PC-9 (cell line): ENCODE measurements at regions of chr2 and their contacts with region 1.

Region 1: GRCh38 chr2:175004980-175005732 is at the start of gene CHN1:
- DNase-seq: peak; percentile 48 to 66
- H3K4me3 ChIP-seq: peak within 1 kb of the TSS; percentile 77
- H3K27ac ChIP-seq: no peak within 1 kb of the TSS
- H3K4me1 ChIP-seq: peaks cover 13% of the 10 kb centered on the region
- H3K27me3 ChIP-seq: peaks cover 47% of the 10 kb centered on the region
- CTCF ChIP-seq: no peak
- total RNA-seq, gene CHN1: 11.8 and 14.0 TPM in 2 replicates

Region 2: DNA sequence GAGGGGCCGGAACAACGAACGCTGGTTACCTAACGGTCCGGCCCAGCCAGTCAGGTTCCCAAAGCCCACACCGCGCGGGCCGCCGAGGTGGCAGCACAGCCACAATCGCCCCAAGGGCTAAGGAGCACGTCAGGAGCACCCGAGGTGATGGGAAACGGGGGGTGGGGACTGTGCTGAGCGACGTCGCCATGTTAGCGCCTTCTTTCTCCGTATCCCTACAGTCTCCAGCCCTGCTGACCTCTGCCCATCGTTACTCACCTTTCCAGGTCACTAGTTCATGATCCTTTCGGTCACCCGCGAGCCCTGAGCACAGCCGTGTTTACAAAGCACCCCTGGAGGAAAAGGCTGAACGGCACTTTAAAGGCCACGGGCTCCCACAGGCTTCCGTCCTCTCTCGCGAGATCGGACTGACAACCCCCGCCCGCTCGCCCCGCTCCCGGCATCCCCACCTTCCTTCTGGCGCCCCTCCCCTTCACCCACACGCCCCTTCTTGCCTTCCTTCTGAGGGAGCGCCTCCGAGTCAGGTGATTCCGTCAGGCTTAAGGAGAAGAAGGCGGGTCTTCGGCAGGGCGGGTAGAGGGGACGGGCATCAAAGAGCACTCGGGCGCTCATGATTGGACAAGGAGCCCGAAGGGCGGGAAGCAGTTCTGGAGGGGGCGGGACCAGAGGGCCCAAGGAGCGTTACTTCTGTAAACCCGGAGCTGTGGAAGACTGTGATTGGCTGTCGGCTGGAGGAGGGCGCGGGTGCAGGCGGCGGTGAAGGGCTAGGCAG is 162.8 kb after region 1 on chr2 and contains the start of gene ATF2:
- CTCF ChIA-PET with region 1: interaction called, 13 read pairs
- POLR2A ChIA-PET with region 1: no interaction called
- intact Hi-C with region 1: no loop called
- DNase-seq: peak; percentile 100
- H3K4me3 ChIP-seq: peak within 1 kb of the TSS; percentile 91
- H3K27ac ChIP-seq: peak within 1 kb of the TSS; percentile 67
- H3K4me1 ChIP-seq: peaks cover 20% of the 10 kb centered on the region
- H3K27me3 ChIP-seq: no peaks in the 10 kb centered on the region
- CTCF ChIP-seq: no peak
- total RNA-seq, gene ATF2: 80.9 and 94.5 TPM in 2 replicates

Region 3: GRCh38 chr2:175418221-175418835 is 413.2 kb after region 1 on chr2:
- CTCF ChIA-PET with region 1: no interaction called
- POLR2A ChIA-PET with region 1: no interaction called
- intact Hi-C with region 1: no loop called
- DNase-seq: no peak
- H3K4me3 ChIP-seq: no peak overlapping the region
- H3K27ac ChIP-seq: no peak overlapping the region
- H3K4me1 ChIP-seq: no peaks in the 10 kb centered on the region
- H3K27me3 ChIP-seq: peaks cover 15% of the 10 kb centered on the region; the same call in 1 of the 2 replicates
- CTCF ChIP-seq: no peak